Activated T-helper 1 cell treated with anti-CD3 and anti-CD28 coated beads, Interleukin-12 subunit alpha, Interleukin-12 subunit beta, Interleukin-2, Interleukin-4 antibody, amounts not matched to agents 30 ng/mL and 10 ng/mL and 1 ng/mL, durations not matched to agents 14 hours and 24 hours and 36 hours (primary cell): ENCODE measurements at regions of chr1 and their contacts with region 1.

Region 1: GRCh38 chr1:115138968-115139367 is 49.7 kb upstream of the TSPAN2 start:
- DNase-seq: peak; percentile 37
- H3K4me3 Mint-ChIP-seq: no peak overlapping the region
- H3K27ac Mint-ChIP-seq: no peak overlapping the region
- H3K4me1 Mint-ChIP-seq: peaks cover 7% of the 10 kb centered on the region
- H3K27me3 Mint-ChIP-seq: peaks cover 14% of the 10 kb centered on the region

Region 2: GRCh38 chr1:115068826-115069572 is 70.0 kb before region 1 on chr1:
- intact Hi-C with region 1: no loop called
- DNase-seq: no peak
- H3K4me3 Mint-ChIP-seq: no peak overlapping the region
- H3K27ac Mint-ChIP-seq: no peak overlapping the region
- H3K4me1 Mint-ChIP-seq: peaks cover 23% of the 10 kb centered on the region
- H3K27me3 Mint-ChIP-seq: no peaks in the 10 kb centered on the region

Region 3: GRCh38 chr1:115469703-115470476 is 330.9 kb after region 1 on chr1:
- intact Hi-C with region 1: loop called (anchors 1 kb)
- DNase-seq: no peak
- H3K4me3 Mint-ChIP-seq: no peak overlapping the region
- H3K27ac Mint-ChIP-seq: no peak overlapping the region
- H3K4me1 Mint-ChIP-seq: no peaks in the 10 kb centered on the region
- H3K27me3 Mint-ChIP-seq: peaks cover 2% of the 10 kb centered on the region

Region 4: GRCh38 chr1:115595279-115596079 is 456.5 kb after region 1 on chr1:
- intact Hi-C with region 1: loop called (anchors 1 kb)
- DNase-seq: peak; percentile 34
- H3K4me3 Mint-ChIP-seq: no peak overlapping the region
- H3K27ac Mint-ChIP-seq: no peak overlapping the region
- H3K4me1 Mint-ChIP-seq: no peaks in the 10 kb centered on the region
- H3K27me3 Mint-ChIP-seq: peaks cover 8% of the 10 kb centered on the region

Region 5: DNA sequence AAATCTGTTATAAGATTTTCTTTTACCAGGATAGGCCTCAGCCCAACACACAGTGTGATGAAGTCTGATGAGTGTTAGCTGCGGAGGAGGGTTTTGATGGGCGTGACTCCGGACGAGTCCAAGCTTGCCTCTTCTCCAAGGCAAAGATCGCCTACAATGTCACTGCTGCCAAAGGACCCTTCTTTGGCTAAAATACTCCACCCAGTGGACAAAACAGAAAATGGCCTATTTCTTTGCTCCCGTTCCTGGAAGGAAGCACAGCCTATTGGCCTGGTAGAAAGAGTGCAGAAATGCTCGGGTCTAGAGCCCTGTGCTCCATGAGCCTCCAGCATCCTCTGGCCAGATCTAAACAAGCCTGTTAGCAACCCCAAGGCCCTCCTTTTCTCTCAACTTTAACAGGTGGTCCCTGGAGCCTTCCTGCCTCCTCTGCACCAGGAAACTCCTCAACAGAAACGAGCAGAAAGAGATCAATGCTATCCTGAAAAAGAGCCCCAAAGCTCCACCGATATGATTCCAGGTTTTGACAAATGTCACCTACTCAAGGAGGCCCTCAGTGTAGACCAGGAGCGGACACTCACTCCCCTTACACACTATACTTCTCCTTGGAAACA is 633.0 kb after region 1 on chr1:
- intact Hi-C with region 1: loop called (anchors 5 kb)
- DNase-seq: no peak
- H3K4me3 Mint-ChIP-seq: no peak overlapping the region
- H3K27ac Mint-ChIP-seq: no peak overlapping the region
- H3K4me1 Mint-ChIP-seq: no peaks in the 10 kb centered on the region
- H3K27me3 Mint-ChIP-seq: peaks cover 8% of the 10 kb centered on the region